Prostate gland (tissue), 2 donors: ENCODE measurements at regions of chr18 and their contacts with region 1.

Region 1: GRCh38 chr18:10051877-10052631 is 138.2 kb downstream of the VAPA start:
- DNase-seq: no peak
- H3K4me3 ChIP-seq: no peak overlapping the region
- H3K27ac ChIP-seq: peak overlapping the region in 1 of 2 donors; percentile 33
- H3K4me1 ChIP-seq: no peaks in the 10 kb centered on the region
- H3K27me3 ChIP-seq: no peaks in the 10 kb centered on the region
- CTCF ChIP-seq: no peak
- POLR2A ChIP-seq: no peak

Region 2: DNA sequence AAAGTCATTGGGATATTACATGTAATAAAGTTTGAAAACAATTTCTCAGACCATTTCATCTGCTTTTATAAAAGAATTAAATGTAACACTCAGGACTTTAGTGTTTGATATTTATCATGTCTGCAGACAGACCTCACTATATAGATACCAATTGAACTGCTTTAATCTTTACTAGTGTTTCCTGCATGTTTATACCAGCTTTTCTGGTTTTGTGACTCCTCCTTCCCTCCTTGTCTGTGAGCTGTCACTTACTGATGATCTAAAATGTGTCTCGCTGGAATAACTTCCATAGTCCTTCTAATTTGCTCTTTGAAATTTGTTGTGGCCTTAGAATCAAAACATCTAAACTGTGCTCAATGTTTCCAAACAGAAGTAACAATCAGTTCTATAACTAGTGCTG is 788.8 kb before region 1 on chr18:
- intact Hi-C with region 1: no loop called
- DNase-seq: no peak
- H3K4me3 ChIP-seq: no peak overlapping the region
- H3K27ac ChIP-seq: no peak overlapping the region
- H3K4me1 ChIP-seq: no peaks in the 10 kb centered on the region
- H3K27me3 ChIP-seq: no peaks in the 10 kb centered on the region
- CTCF ChIP-seq: no peak
- POLR2A ChIP-seq: no peak

Region 3: GRCh38 chr18:9987931-9988330 is 64.1 kb before region 1 on chr18:
- intact Hi-C with region 1: no loop called
- DNase-seq: peak; percentile 65
- H3K4me3 ChIP-seq: no peak overlapping the region
- H3K27ac ChIP-seq: peak overlapping the region; percentile 21 to 45
- H3K4me1 ChIP-seq: no peaks in the 10 kb centered on the region
- H3K27me3 ChIP-seq: no peaks in the 10 kb centered on the region
- CTCF ChIP-seq: no peak
- POLR2A ChIP-seq: no peak

Region 4: DNA sequence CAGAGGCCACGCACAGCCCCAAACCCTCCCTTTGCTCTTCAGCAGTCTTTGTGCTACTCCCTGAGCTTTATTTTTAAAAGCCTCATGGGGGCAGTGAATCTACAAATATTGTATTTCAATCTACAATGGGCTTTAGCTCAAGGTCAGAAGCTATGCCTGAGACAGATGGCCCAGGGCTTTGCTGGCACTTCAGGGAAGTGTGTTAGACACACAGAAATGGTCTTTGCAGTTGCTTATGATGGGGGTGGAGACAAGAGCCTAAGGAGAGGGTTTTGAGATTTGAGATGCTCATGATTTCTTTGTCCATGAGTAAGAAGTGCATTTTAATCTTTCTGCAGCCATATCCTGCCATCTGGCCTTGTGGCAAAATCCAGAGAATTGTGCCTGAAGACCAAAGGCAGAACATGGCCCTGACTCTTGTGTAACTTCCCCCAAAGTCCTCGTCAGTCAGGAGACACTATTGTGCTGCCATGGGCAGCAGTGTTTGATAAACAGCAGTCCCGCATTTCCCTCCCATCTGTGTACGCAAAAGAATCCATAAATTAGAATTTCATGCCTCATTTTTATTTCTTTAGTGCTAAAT is 45.7 kb before region 1 on chr18:
- intact Hi-C with region 1: loop called (anchors 1 kb)
- DNase-seq: no peak
- H3K4me3 ChIP-seq: no peak overlapping the region
- H3K27ac ChIP-seq: no peak overlapping the region
- H3K4me1 ChIP-seq: no peaks in the 10 kb centered on the region
- H3K27me3 ChIP-seq: no peaks in the 10 kb centered on the region
- CTCF ChIP-seq: peak in 2 of 4 experiments; percentile 20 to 25
- POLR2A ChIP-seq: no peak

Region 5: GRCh38 chr18:10242936-10243680 is 191.1 kb after region 1 on chr18:
- intact Hi-C with region 1: loop called (anchors 5 kb)
- DNase-seq: peak; percentile 42
- H3K4me3 ChIP-seq: no peak overlapping the region
- H3K27ac ChIP-seq: no peak overlapping the region
- H3K4me1 ChIP-seq: no peaks in the 10 kb centered on the region
- H3K27me3 ChIP-seq: no peaks in the 10 kb centered on the region
- CTCF ChIP-seq: no peak
- POLR2A ChIP-seq: no peak